Heart right ventricle (tissue), 16 donors: ENCODE measurements at regions of chr15 and their contacts with region 1.

Region 1: GRCh38 chr15:35665896-35666536 is 120.1 kb upstream of the DPH6 start:
- DNase-seq: peak; percentile 32 to 80
- ATAC-seq: peak; percentile 78 to 97 (median 92)
- H3K4me3 ChIP-seq: peak overlapping the region in 1 of 10 donors; percentile 2
- H3K27ac ChIP-seq: peak overlapping the region; percentile 49 to 88 (median 76)
- H3K4me1 ChIP-seq: peaks cover 4 to 51% (median 36%) of the 10 kb centered on the region in 9 donors
- H3K27me3 ChIP-seq: no peaks in the 10 kb centered on the region
- CTCF ChIP-seq: no peak

Region 2: GRCh38 chr15:35545824-35546510 is 120.0 kb before region 1 on chr15 and contains the start of gene DPH6:
- intact Hi-C with region 1: loop called in 4 of 10 experiments (anchors 1 to 10 kb)
- DNase-seq: peak; percentile 86 to 87
- ATAC-seq: peak; percentile 94 to 96 (median 96)
- H3K4me3 ChIP-seq: peak within 1 kb of the TSS; percentile 12 to 87 (median 70)
- H3K27ac ChIP-seq: peak within 1 kb of the TSS; percentile 96 to 100 (median 98)
- H3K4me1 ChIP-seq: peaks cover 0 to 40% (median 29%) of the 10 kb centered on the region in 9 donors
- H3K27me3 ChIP-seq: no peaks in the 10 kb centered on the region
- CTCF ChIP-seq: peak in 4 of 9 donors; percentile 12 to 37 (median 24)
- total RNA-seq, gene DPH6: 12.2 to 25.8 (median 23.4) TPM

Region 3: DNA sequence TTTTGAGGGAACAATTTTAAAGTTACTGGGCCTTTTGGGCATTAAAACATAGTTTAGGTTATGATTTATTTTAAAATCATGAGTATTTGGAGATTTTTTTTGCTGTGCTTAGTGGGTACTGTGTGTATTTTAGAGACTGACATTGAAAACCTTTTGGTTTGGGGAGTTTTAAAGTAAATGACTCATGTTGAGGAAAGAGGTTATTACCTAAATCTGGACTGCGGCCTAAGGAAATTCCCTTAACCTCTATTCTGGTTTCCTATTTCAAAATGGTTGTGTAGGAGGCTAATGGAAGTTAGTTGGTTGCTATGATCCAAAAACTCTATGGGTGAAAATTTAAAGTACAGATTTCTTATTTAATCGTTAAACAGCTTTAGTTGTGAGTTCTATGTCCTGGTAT is 62.7 kb before region 1 on chr15:
- intact Hi-C with region 1: loop called in 1 of 10 experiments (anchors 10 kb)
- DNase-seq: no peak
- ATAC-seq: no peak
- H3K4me3 ChIP-seq: no peak overlapping the region
- H3K27ac ChIP-seq: no peak overlapping the region
- H3K4me1 ChIP-seq: peaks cover 0 to 24% (median 16%) of the 10 kb centered on the region in 9 donors
- H3K27me3 ChIP-seq: no peaks in the 10 kb centered on the region
- CTCF ChIP-seq: no peak

Region 4: GRCh38 chr15:35648941-35649340 is 17.1 kb before region 1 on chr15:
- intact Hi-C with region 1: no loop called
- DNase-seq: no peak
- ATAC-seq: no peak
- H3K4me3 ChIP-seq: no peak overlapping the region
- H3K27ac ChIP-seq: no peak overlapping the region
- H3K4me1 ChIP-seq: no peaks in the 10 kb centered on the region
- H3K27me3 ChIP-seq: no peaks in the 10 kb centered on the region
- CTCF ChIP-seq: no peak

Region 5: DNA sequence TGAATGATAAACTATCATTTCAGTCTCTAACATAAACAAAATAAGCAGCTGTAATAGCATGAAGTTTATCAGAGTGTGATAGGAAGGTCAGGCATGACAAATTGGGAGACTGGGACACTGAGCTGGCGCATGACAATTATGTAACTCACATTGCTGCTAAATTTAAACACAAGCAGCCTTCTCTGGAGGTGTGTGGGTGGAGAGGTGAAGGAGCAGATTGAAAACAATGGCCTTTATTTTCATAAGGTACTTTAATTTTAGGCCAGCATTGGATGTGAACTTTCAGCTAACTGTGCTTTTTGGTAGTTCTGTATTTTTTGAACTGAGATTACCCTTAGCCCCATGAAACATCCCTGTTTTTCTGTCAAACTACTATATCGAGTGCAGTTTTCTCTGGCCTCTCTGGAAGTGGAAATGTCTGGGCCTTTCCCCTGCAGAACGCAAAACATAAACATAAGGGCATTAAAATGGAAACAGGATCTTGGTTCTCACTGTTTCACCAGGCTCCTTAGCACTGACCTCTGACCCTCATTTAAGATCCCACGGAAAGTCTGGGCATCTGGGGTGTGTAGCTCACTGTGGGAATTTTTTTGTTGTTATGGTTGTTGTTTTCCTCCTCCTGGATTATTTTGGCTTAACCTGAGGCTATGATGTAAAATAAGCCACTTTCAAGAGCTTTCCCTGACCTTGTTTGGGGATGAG is 40.0 kb after region 1 on chr15:
- intact Hi-C with region 1: loop called in 1 of 10 experiments (anchors 5 kb)
- DNase-seq: peak in 1 of 2 donors; percentile 65
- ATAC-seq: peak; percentile 91 to 99 (median 96)
- H3K4me3 ChIP-seq: no peak overlapping the region
- H3K27ac ChIP-seq: peak overlapping the region; percentile 52 to 91 (median 80)
- H3K4me1 ChIP-seq: peaks cover 0 to 40% (median 25%) of the 10 kb centered on the region in 9 donors
- H3K27me3 ChIP-seq: no peaks in the 10 kb centered on the region
- CTCF ChIP-seq: no peak